A673 (cell line): ENCODE measurements at regions of chr2 and their contacts with region 1.

Region 1: GRCh38 chr2:222969491-222969890 is 82.5 kb upstream of the KCNE4 start:
- DNase-seq: peak; percentile 54
- H3K4me3 ChIP-seq: no peak overlapping the region
- H3K27ac ChIP-seq: no peak overlapping the region
- H3K4me1 ChIP-seq: peaks cover 30% of the 10 kb centered on the region
- H3K27me3 ChIP-seq: no peaks in the 10 kb centered on the region
- CTCF ChIP-seq: no peak

Region 2: DNA sequence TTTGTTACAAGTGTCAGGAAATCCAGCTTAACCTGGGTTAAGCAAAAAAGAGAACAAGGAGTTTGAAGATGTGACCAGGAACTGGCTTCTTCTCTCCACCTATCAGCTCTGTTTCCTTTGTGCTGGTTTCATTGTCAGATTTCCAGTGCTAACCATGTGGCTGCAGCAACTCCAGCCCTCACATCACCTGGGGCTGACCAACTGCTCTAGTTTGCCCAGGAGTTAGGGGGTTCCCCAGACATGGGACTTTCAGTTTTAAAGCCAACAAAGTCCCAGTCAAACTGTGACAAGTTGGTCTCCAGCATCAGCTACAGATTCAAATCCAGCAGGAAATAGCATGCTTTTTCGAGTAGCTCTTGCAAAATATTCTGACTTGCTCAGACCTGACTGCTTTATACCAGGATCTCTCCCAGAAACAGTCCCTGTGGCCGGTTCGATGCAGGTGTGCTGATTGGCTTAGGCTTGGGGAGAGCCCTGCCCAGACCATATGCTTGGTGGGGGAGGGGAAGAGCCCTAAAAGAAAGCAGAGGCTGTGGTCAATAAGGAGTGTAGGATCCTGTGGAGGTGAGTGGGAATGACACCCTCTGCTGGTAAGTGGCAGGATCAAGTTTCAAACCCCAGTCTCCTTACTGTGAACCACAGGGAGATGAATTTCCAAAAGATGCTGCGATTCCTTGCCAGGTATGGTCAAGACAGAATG is 132.0 kb after region 1 on chr2:
- CTCF ChIA-PET with region 1: interaction called, 14 read pairs
- POLR2A ChIA-PET with region 1: no interaction called
- intact Hi-C with region 1: loop called (anchors 5 kb)
- DNase-seq: peak; percentile 70
- H3K4me3 ChIP-seq: no peak overlapping the region
- H3K27ac ChIP-seq: peak overlapping the region; percentile 31
- H3K4me1 ChIP-seq: peaks cover 46% of the 10 kb centered on the region
- H3K27me3 ChIP-seq: no peaks in the 10 kb centered on the region
- CTCF ChIP-seq: peak; percentile 68